ENCODE measurements at regions of chr11 and their contacts with region 1.

Region 1: GRCh38 chr11:34357701-34358257 is at the start of gene ABTB2:
- DNase-seq: peak; percentile 94
- ATAC-seq: peak; percentile 87
- H3K4me3 Mint-ChIP-seq: peak within 1 kb of the TSS; percentile 88
- H3K27ac Mint-ChIP-seq: peak within 1 kb of the TSS; percentile 86
- H3K4me1 Mint-ChIP-seq: peaks cover 39% of the 10 kb centered on the region
- H3K27me3 Mint-ChIP-seq: peaks cover 17% of the 10 kb centered on the region
- CTCF ChIP-seq: no peak
- total RNA-seq, gene ABTB2: 68.6 and 73.0 TPM in 2 replicates

Region 2: GRCh38 chr11:33835143-33835878 is 522.5 kb before region 1 on chr11:
- CTCF ChIA-PET with region 1: no interaction called
- POLR2A ChIA-PET with region 1: no interaction called
- intact Hi-C with region 1: loop called (anchors 1 kb)
- DNase-seq: no peak
- ATAC-seq: no peak
- H3K4me3 Mint-ChIP-seq: no peak overlapping the region
- H3K27ac Mint-ChIP-seq: no peak overlapping the region
- H3K4me1 Mint-ChIP-seq: no peaks in the 10 kb centered on the region
- H3K27me3 Mint-ChIP-seq: peaks cover 30% of the 10 kb centered on the region
- CTCF ChIP-seq: no peak

Region 3: GRCh38 chr11:33996498-33997454 is 361.0 kb before region 1 on chr11:
- CTCF ChIA-PET with region 1: interaction called, 12 read pairs
- POLR2A ChIA-PET with region 1: interaction called, 4 read pairs
- intact Hi-C with region 1: loop called (anchors 1 kb)
- DNase-seq: peak; percentile 41
- ATAC-seq: peak; percentile 98
- H3K4me3 Mint-ChIP-seq: peak overlapping the region; percentile 36
- H3K27ac Mint-ChIP-seq: no peak overlapping the region
- H3K4me1 Mint-ChIP-seq: peaks cover 10% of the 10 kb centered on the region
- H3K27me3 Mint-ChIP-seq: peaks cover 19% of the 10 kb centered on the region
- CTCF ChIP-seq: peak; percentile 40

Region 4: GRCh38 chr11:34174412-34175041 is 183.3 kb before region 1 on chr11:
- CTCF ChIA-PET with region 1: interaction called, 100 read pairs
- POLR2A ChIA-PET with region 1: interaction called, 123 read pairs
- intact Hi-C with region 1: loop called (anchors 1 kb)
- DNase-seq: peak; percentile 75
- ATAC-seq: peak; percentile 99
- H3K4me3 Mint-ChIP-seq: peak overlapping the region; percentile 63
- H3K27ac Mint-ChIP-seq: no peak overlapping the region
- H3K4me1 Mint-ChIP-seq: peaks cover 36% of the 10 kb centered on the region
- H3K27me3 Mint-ChIP-seq: no peaks in the 10 kb centered on the region
- CTCF ChIP-seq: no peak

Region 5: GRCh38 chr11:34243726-34244464 is 113.9 kb before region 1 on chr11:
- CTCF ChIA-PET with region 1: interaction called, 3 read pairs
- POLR2A ChIA-PET with region 1: interaction called, 27 read pairs
- intact Hi-C with region 1: no loop called
- DNase-seq: no peak
- ATAC-seq: peak; percentile 33
- H3K4me3 Mint-ChIP-seq: peak overlapping the region; percentile 72
- H3K27ac Mint-ChIP-seq: peak overlapping the region; percentile 92
- H3K4me1 Mint-ChIP-seq: peaks cover 83% of the 10 kb centered on the region
- H3K27me3 Mint-ChIP-seq: no peaks in the 10 kb centered on the region
- CTCF ChIP-seq: no peak

Region 6: DNA sequence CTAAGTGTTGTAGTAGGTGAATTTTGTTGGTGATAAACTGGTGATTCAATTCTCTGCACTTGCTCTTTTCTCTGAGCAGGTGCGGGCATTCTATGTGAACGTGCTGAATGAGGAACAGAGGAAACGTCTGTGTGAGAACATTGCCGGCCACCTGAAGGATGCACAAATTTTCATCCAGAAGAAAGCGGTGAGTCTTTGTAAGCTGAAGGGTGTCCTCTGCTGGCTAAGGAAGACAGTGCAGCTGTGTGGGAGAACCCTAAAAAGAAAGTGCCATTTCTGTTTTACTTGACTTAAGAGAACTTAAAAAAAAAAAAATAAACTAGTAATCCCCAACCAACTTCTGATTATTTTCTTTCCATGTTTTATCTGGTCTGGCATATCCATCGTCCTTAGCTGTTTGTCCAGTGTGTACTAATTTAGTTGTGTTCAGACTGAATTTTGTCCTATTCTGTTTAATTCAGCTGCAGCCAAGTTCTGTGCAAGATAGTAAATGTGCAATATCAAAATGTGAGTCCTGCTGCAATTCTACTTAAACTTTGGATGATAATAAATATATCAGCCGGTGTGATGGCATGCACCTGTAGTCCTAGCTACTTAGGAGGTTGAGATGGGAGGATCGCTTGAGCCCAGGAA is 110.5 kb after region 1 on chr11:
- CTCF ChIA-PET with region 1: interaction called, 7 read pairs
- POLR2A ChIA-PET with region 1: no interaction called
- intact Hi-C with region 1: loop called (anchors 1 kb)
- DNase-seq: no peak
- ATAC-seq: peak; percentile 66
- H3K4me3 Mint-ChIP-seq: no peak overlapping the region
- H3K27ac Mint-ChIP-seq: no peak overlapping the region
- H3K4me1 Mint-ChIP-seq: no peaks in the 10 kb centered on the region
- H3K27me3 Mint-ChIP-seq: no peaks in the 10 kb centered on the region
- CTCF ChIP-seq: no peak

Measured in activated B cell treated with CpG ODN at 0.5 μM for 24 hours (primary cell).